AG04450 (cell line): ENCODE measurements at regions of chr2 and their contacts with region 1.

Region 1: GRCh38 chr2:25063876-25064660 is 22.2 kb downstream of the EFR3B start:
- DNase-seq: no peak
- H3K4me3 ChIP-seq: no peak overlapping the region
- H3K27ac ChIP-seq: no peak overlapping the region
- H3K27me3 ChIP-seq: peaks cover 9% of the 10 kb centered on the region
- CTCF ChIP-seq: no peak

Region 2: GRCh38 chr2:24642351-24642750 is 421.7 kb before region 1 on chr2:
- CTCF ChIA-PET with region 1: no interaction called
- POLR2A ChIA-PET with region 1: interaction called, 11 read pairs
- DNase-seq: no peak
- H3K4me3 ChIP-seq: no peak overlapping the region
- H3K27ac ChIP-seq: no peak overlapping the region
- H3K27me3 ChIP-seq: no peaks in the 10 kb centered on the region
- CTCF ChIP-seq: no peak

Region 3: GRCh38 chr2:25009954-25010353 is 54.1 kb before region 1 on chr2:
- CTCF ChIA-PET with region 1: no interaction called
- POLR2A ChIA-PET with region 1: no interaction called
- DNase-seq: no peak
- H3K4me3 ChIP-seq: no peak overlapping the region
- H3K27ac ChIP-seq: no peak overlapping the region
- H3K27me3 ChIP-seq: no peaks in the 10 kb centered on the region
- CTCF ChIP-seq: no peak